CD4-positive, alpha-beta T cell (primary cell): ENCODE measurements at regions of chr6 and their contacts with region 1.

Region 1: GRCh38 chr6:35445696-35446095 is 6.4 kb upstream of the FANCE start:
- DNase-seq: peak in 2 of 14 experiments; percentile 15 to 41
- ATAC-seq: no peak
- H3K4me3 ChIP-seq: no peak overlapping the region
- H3K4me3 Mint-ChIP-seq: no peak overlapping the region
- H3K27ac ChIP-seq: no peak overlapping the region
- H3K27ac Mint-ChIP-seq: no peak overlapping the region
- H3K4me1 ChIP-seq: peaks cover 15% of the 10 kb centered on the region
- H3K4me1 Mint-ChIP-seq: peaks cover 10% of the 10 kb centered on the region
- H3K27me3 ChIP-seq: no peaks in the 10 kb centered on the region
- H3K27me3 Mint-ChIP-seq: no peaks in the 10 kb centered on the region
- CTCF ChIP-seq: no peak

Region 2: DNA sequence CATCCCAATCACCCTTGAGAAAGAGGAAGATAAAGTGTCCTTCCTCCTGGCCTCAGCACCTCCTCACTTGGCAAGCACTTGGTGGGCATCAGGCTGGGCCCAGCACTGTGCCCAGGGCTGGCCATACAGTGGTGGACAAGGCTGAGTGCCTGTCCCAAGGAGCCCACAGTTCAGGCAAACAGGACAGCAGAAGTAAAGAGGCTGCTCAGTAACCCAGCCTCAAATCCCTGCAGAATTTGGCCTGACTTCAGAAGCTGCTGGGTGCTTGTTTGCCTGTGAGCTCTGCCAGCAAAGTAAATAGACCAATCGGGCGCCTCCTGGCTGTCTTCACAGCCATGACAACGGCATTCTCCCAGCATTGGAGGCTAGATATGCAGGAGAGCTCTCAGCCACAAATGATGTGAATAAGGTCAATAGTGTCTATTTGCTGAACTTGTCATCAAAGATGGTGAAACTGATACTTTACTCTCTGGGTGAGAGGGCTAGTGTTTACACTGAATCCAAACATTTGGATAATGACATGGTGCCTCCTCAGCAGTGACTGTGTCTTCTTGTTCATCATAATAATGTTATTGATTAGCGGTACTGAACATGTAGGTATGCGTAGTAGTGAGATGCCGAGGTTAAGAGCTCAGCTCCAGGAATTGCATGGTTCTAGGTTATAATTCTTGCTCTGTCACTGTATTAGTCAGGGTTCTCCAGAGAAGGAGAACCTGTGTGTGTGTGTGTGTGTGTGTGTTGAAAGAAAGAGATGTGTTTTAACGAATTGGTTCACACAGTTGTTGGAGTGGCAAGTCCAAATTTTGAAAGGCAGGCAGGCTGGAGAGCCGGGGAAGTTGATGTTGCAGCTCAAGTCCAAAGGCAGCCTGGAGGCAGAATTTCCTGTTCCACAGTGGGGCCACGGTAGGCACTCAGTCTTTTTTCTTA is 30.4 kb before region 1 on chr6:
- CTCF ChIA-PET with region 1: interaction called, 3 read pairs
- POLR2A ChIA-PET with region 1: interaction called, 4 read pairs
- intact Hi-C with region 1: loop called (anchors 2 to 5 kb)
- DNase-seq: peak in 9 of 14 experiments; percentile 10 to 61 (median 26)
- ATAC-seq: no peak
- H3K4me3 ChIP-seq: no peak overlapping the region
- H3K4me3 Mint-ChIP-seq: no peak overlapping the region
- H3K27ac ChIP-seq: no peak overlapping the region
- H3K27ac Mint-ChIP-seq: peak overlapping the region; percentile 61
- H3K4me1 ChIP-seq: peaks cover 50% of the 10 kb centered on the region
- H3K4me1 Mint-ChIP-seq: peaks cover 52% of the 10 kb centered on the region
- H3K27me3 ChIP-seq: no peaks in the 10 kb centered on the region
- H3K27me3 Mint-ChIP-seq: no peaks in the 10 kb centered on the region
- CTCF ChIP-seq: peak; percentile 15

Region 3: DNA sequence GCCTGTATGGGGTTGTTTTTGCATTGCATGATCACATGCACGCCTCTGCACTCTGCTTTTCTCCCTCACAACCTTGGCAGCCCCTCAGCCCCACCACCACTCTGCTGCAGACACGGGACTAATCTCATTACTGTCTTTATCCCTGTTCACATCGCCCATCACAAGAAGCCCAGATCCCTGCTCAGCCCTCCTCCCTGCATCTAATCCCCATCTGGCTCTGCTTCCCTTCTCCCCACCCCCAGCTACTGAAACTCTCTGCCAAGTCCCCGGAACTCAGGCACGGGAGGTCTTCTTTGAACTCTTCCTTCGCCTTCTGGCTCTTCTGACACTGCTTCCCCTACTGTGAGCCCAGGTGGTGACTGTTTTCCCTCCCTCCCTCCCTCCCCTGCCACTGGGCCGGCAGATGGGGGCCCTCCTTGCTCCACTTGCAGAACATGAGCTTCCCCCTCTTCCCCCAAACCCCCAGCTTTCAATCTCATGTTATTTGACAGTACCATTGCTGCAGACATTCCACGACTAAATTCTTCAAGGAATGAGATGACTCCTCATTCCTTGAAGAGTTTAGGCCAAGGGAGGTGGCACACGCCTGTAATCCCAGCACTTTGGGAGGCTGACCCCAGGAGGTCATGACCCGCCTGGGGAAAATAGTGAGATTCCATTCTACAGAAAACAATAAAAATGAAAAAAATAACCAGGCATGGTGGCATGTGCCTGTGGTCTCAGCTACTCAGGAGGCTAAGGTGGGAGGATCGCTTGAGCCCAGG is 88.9 kb after region 1 on chr6:
- CTCF ChIA-PET with region 1: no interaction called
- POLR2A ChIA-PET with region 1: no interaction called
- intact Hi-C with region 1: no loop called
- DNase-seq: no peak
- ATAC-seq: no peak
- H3K4me3 ChIP-seq: no peak overlapping the region
- H3K4me3 Mint-ChIP-seq: no peak overlapping the region
- H3K27ac ChIP-seq: no peak overlapping the region
- H3K27ac Mint-ChIP-seq: no peak overlapping the region
- H3K4me1 ChIP-seq: peaks cover 6% of the 10 kb centered on the region
- H3K4me1 Mint-ChIP-seq: peaks cover 6% of the 10 kb centered on the region
- H3K27me3 ChIP-seq: no peaks in the 10 kb centered on the region
- H3K27me3 Mint-ChIP-seq: no peaks in the 10 kb centered on the region
- CTCF ChIP-seq: no peak